Colonic mucosa (tissue), 4 donors: ENCODE measurements at regions of chr10 and their contacts with region 1.

Region 1: DNA sequence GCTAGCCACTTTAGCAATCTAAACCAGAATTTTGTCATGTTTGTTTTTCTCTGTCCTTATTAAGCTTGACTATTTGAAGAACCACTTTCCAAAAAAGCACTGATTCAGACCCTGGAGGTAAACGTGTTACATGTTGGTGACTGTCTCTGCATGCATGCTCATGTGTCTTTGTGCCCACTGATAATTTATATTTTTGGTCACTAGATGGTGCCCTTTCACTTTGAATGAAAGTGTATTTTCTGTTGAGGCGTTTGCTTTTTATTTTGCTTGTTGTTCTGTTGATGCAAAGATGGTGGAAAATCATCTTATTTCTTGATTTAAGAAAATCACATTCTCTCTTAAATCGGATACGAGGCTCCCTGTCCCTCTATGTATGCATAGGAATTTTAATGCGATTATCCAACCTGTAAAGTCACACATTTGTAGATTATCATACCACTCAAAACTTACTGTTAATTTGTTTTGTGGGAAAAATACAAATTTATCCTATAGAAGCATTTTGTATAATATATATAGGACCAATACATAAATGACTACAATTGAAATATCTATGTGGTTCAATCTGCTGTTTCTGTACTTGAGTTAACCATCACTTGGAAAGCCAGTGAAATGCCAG is 269.3 kb downstream of the BICC1 start:
- DNase-seq: no peak
- H3K4me3 ChIP-seq: no peak overlapping the region
- H3K27ac ChIP-seq: no peak overlapping the region
- H3K4me1 ChIP-seq: peaks cover 3% of the 10 kb centered on the region
- H3K27me3 ChIP-seq: no peaks in the 10 kb centered on the region
- CTCF ChIP-seq: peak; percentile 34

Region 2: DNA sequence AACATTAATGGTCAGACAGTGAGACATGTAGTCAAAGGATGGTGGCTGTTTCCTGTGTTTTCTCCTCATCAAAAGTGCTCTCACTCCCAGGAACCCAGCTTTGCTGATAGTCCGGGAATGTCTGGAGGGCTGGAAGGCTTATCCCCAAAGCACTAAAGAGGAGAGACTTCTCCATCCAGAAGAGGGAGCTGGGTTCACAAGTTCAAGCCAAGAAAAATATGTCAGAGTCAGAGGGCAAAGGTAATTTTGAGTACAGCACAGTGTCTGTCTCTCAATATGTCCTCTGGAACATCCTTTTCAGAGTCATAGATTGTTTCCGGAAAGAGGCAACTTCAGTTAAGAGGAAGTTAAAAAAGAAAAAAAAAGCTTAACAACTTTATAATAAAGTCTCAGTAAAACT is 112.9 kb after region 1 on chr10:
- intact Hi-C with region 1: no loop called
- DNase-seq: no peak
- H3K4me3 ChIP-seq: no peak overlapping the region
- H3K27ac ChIP-seq: no peak overlapping the region
- H3K4me1 ChIP-seq: no peaks in the 10 kb centered on the region
- H3K27me3 ChIP-seq: no peaks in the 10 kb centered on the region
- CTCF ChIP-seq: no peak

Region 3: DNA sequence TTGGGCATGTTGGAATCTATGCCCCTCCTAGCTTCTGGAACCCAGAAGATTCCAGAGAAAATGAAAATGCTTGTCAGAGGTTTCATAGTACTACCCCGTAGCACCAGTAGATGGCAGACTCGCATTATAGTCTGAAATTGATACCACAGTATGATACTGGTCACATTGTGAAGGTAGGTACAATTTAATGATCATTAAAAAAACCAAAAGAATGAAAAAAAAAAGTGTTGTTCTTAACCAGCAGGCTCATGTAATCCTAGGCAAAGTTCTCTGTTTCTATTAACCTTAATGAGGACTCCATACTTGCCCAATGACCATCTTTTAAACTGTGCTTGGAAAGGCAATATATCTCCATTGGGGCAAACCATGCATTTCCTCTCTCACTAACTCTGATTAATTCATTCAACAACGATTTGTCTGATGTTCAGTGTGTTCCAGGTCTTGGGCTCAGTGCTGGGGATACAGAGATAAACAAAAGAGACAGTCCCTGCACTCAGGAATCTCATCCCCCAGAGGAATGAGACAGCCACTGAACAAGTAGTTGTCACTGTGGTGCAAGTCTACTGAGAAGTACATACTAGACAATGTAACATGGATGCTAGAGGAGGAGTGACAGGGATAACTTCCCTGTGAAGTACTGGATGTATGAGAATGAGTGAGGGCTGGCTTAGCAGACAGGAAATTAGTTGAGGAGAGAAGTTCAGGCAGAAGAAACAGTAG is 170.9 kb after region 1 on chr10:
- intact Hi-C with region 1: loop called (anchors 5 kb)
- DNase-seq: peak; percentile 63
- H3K4me3 ChIP-seq: no peak overlapping the region
- H3K27ac ChIP-seq: peak overlapping the region; percentile 14
- H3K4me1 ChIP-seq: no peaks in the 10 kb centered on the region
- H3K27me3 ChIP-seq: no peaks in the 10 kb centered on the region
- CTCF ChIP-seq: peak; percentile 54

Region 4: DNA sequence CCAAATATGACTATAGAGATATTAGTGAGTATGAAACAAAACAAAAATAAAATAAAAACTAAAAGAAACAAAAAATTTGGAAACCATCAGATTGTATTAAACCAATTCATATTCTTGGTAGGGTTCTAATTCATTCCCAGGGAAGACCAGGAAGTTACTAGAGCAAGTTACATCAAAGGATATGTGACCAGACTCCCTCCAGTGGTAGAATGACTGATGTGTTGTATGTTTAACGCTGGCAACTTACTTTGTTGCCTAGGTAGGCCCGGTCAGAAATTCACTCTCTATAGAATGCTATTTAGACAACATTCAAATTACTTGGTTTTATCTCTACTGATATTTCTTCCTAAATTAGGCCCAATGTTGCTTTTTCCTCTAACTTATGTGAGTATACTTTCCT is 399.7 kb after region 1 on chr10:
- intact Hi-C with region 1: loop called (anchors 5 kb)
- DNase-seq: no peak
- H3K4me3 ChIP-seq: no peak overlapping the region
- H3K27ac ChIP-seq: no peak overlapping the region
- H3K4me1 ChIP-seq: no peaks in the 10 kb centered on the region
- H3K27me3 ChIP-seq: peaks cover 4% of the 10 kb centered on the region
- CTCF ChIP-seq: peak; percentile 41

Region 5: GRCh38 chr10:59234816-59235429 is 452.9 kb after region 1 on chr10:
- intact Hi-C with region 1: loop called (anchors 10 kb)
- DNase-seq: peak; percentile 32
- H3K4me3 ChIP-seq: no peak overlapping the region
- H3K27ac ChIP-seq: no peak overlapping the region
- H3K4me1 ChIP-seq: no peaks in the 10 kb centered on the region
- H3K27me3 ChIP-seq: no peaks in the 10 kb centered on the region
- CTCF ChIP-seq: peak; percentile 35

Region 6: GRCh38 chr10:59625721-59626522 is 843.9 kb after region 1 on chr10:
- intact Hi-C with region 1: loop called (anchors 5 kb)
- DNase-seq: peak; percentile 37
- H3K4me3 ChIP-seq: no peak overlapping the region
- H3K27ac ChIP-seq: no peak overlapping the region
- H3K4me1 ChIP-seq: peaks cover 4% of the 10 kb centered on the region
- H3K27me3 ChIP-seq: no peaks in the 10 kb centered on the region
- CTCF ChIP-seq: peak; percentile 68